B cell (primary cell): ENCODE measurements at regions of chr10 and their contacts with region 1.

Region 1: DNA sequence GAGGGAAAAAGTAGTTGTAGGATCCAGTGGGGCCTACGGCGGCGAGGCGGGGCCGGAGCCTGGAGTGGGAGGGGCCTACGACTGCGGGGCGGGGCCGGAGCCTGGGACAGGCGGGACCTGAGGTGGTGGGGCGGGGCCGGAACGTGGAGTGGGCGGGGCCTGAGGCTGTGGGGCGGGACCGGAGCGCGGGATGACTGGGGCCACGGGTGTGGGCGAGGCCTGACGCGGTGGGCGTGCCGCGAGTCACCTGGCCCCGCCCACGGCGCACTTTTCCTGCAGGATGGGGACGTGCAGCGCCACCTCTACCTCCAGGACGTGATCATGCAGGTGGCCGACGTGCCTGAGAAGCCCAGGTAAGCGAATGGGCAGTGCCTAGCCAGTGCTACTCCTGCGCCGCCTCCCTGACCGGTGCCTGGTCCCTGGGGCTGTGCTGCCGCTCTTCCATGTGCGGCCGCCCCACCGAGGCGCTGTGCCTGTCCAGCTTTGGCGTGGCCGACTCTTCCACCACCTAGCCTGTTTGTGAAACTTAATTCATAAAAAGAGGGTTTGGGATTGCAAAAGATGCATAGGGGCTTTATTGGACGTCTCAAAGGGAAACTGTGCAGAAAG is 501 bp downstream of the ZNF511 start:
- DNase-seq: no peak
- ATAC-seq: peak; percentile 90
- H3K4me3 ChIP-seq: peak overlapping the region in 4 of 5 experiments; percentile 73 to 94 (median 92)
- H3K4me3 Mint-ChIP-seq: peak overlapping the region; percentile 78
- H3K27ac ChIP-seq: peak overlapping the region; percentile 96 to 97
- H3K27ac Mint-ChIP-seq: peak overlapping the region; percentile 88
- H3K4me1 ChIP-seq: peaks cover 21 to 41% of the 10 kb centered on the region in 2 donors
- H3K4me1 Mint-ChIP-seq: peaks cover 37% of the 10 kb centered on the region
- H3K27me3 ChIP-seq: no peaks in the 10 kb centered on the region
- H3K27me3 Mint-ChIP-seq: no peaks in the 10 kb centered on the region
- CTCF ChIP-seq: no peak

Region 2: DNA sequence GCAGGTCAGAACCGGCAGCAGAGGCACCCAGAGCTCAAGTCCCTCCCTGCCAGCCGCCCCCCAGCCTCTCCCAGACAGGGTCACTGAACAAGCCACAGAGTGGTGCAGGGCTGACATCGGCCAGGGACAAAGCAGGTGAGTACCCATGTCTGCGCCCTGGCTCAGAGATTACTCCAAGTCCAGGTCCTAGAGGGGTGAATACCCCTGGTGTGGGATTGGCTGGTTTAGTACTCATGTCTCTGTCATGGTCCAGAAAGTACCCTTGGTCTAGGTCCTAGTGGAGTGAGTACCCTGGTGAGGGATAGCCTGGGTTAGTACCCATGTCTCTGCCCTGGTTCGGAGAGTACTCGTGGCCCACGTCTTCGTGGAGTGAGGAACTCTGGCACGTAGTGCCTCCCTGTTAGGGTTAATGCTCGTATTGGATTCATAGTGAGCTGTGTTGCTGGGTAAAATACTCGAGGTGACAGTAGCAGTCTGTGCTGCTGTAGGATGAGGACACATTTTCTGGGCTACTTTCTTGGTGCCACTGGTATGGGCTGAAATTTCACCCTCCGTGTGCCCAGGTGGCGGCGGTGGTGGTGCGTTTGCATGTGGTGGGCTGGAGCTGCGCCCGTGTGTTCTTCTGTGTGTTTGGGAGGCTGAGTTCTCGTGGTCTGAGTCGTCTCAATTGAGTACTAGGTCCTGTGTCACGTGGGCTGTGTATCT is 174.7 kb before region 1 on chr10:
- CTCF ChIA-PET with region 1: no interaction called
- POLR2A ChIA-PET with region 1: no interaction called
- intact Hi-C with region 1: no loop called
- DNase-seq: no peak
- ATAC-seq: no peak
- H3K4me3 ChIP-seq: no peak overlapping the region
- H3K4me3 Mint-ChIP-seq: peak overlapping the region; percentile 50
- H3K27ac ChIP-seq: no peak overlapping the region
- H3K27ac Mint-ChIP-seq: no peak overlapping the region
- H3K4me1 ChIP-seq: peaks cover 3 to 7% of the 10 kb centered on the region in 2 donors
- H3K4me1 Mint-ChIP-seq: peaks cover 18% of the 10 kb centered on the region
- H3K27me3 ChIP-seq: no peaks in the 10 kb centered on the region
- H3K27me3 Mint-ChIP-seq: peaks cover 10% of the 10 kb centered on the region
- CTCF ChIP-seq: no peak

Region 3: GRCh38 chr10:133278577-133279265 is 30.5 kb before region 1 on chr10:
- CTCF ChIA-PET with region 1: interaction called, 21 read pairs
- POLR2A ChIA-PET with region 1: interaction called, 12 read pairs
- intact Hi-C with region 1: loop called (anchors 1 kb)
- DNase-seq: peak; percentile 68
- ATAC-seq: peak; percentile 24
- H3K4me3 ChIP-seq: peak overlapping the region in 1 of 5 experiments; percentile 33
- H3K4me3 Mint-ChIP-seq: peak overlapping the region; percentile 90
- H3K27ac ChIP-seq: peak overlapping the region; percentile 57 to 97
- H3K27ac Mint-ChIP-seq: peak overlapping the region; percentile 95
- H3K4me1 ChIP-seq: peaks cover 45 to 63% of the 10 kb centered on the region in 2 donors
- H3K4me1 Mint-ChIP-seq: peaks cover 43% of the 10 kb centered on the region
- H3K27me3 ChIP-seq: no peaks in the 10 kb centered on the region
- H3K27me3 Mint-ChIP-seq: no peaks in the 10 kb centered on the region
- CTCF ChIP-seq: no peak

Region 4: GRCh38 chr10:133357285-133358151 is 48.3 kb after region 1 on chr10 and contains the start of gene FUOM:
- CTCF ChIA-PET with region 1: no interaction called
- POLR2A ChIA-PET with region 1: no interaction called
- intact Hi-C with region 1: loop called (anchors 5 kb)
- DNase-seq: peak; percentile 89
- ATAC-seq: peak; percentile 85
- H3K4me3 ChIP-seq: peak within 1 kb of the TSS in 4 of 5 experiments; percentile 57 to 87 (median 68)
- H3K4me3 Mint-ChIP-seq: peak within 1 kb of the TSS; percentile 80
- H3K27ac ChIP-seq: peak within 1 kb of the TSS in 1 of 2 donors; percentile 71
- H3K27ac Mint-ChIP-seq: peak within 1 kb of the TSS; percentile 26
- H3K4me1 ChIP-seq: peaks cover 20 to 39% of the 10 kb centered on the region in 2 donors
- H3K4me1 Mint-ChIP-seq: peaks cover 32% of the 10 kb centered on the region
- H3K27me3 ChIP-seq: no peaks in the 10 kb centered on the region
- H3K27me3 Mint-ChIP-seq: no peaks in the 10 kb centered on the region
- CTCF ChIP-seq: no peak
- total RNA-seq, gene FUOM: 20.7 and 23.8 TPM in 2 replicates

Region 5: GRCh38 chr10:133373104-133373624 is 63.9 kb after region 1 on chr10 and contains the start of gene ECHS1:
- CTCF ChIA-PET with region 1: no interaction called
- POLR2A ChIA-PET with region 1: no interaction called
- intact Hi-C with region 1: loop called (anchors 1 kb)
- DNase-seq: peak; percentile 92
- ATAC-seq: peak; percentile 96
- H3K4me3 ChIP-seq: peak within 1 kb of the TSS; percentile 53 to 74 (median 69)
- H3K4me3 Mint-ChIP-seq: peak within 1 kb of the TSS; percentile 87
- H3K27ac ChIP-seq: peak within 1 kb of the TSS; percentile 65 to 77
- H3K27ac Mint-ChIP-seq: peak within 1 kb of the TSS; percentile 84
- H3K4me1 ChIP-seq: peaks cover 15 to 27% of the 10 kb centered on the region in 2 donors
- H3K4me1 Mint-ChIP-seq: peaks cover 18% of the 10 kb centered on the region
- H3K27me3 ChIP-seq: no peaks in the 10 kb centered on the region
- H3K27me3 Mint-ChIP-seq: no peaks in the 10 kb centered on the region
- CTCF ChIP-seq: no peak
- total RNA-seq, gene ECHS1: 27.5 and 29.5 TPM in 2 replicates

Region 6: DNA sequence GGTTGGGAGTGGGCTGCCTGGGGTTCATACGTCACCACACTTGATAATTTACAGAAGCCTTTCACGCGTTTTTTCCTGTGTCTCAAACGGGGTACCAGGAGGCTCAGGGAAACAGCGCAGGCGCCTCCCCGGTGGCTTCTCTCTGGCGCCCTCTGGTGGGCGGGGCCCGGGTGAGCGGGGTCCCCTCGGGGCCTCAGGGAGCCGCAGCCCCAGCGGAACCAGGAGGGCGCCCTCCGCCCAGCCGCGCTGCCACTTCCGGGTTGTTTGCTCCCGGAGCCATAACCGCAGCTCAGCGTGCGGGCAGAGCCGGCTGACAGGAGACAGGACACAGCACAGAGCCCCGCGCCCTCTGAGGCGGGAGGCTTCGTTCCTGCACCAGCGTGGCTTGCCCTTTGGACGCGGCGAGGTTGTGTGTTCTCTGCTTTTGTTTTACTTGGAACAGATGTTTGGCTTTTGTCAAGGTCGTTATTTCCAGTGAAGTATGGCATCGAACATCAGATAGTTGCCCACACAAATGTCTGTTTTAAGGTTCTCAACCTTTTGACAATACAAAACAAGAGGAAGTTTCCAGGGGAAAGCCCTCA is 211.0 kb after region 1 on chr10:
- CTCF ChIA-PET with region 1: no interaction called
- POLR2A ChIA-PET with region 1: no interaction called
- intact Hi-C with region 1: loop called (anchors 5 kb)
- DNase-seq: peak; percentile 88
- ATAC-seq: peak; percentile 100
- H3K4me3 ChIP-seq: peak overlapping the region; percentile 9 to 65 (median 52)
- H3K4me3 Mint-ChIP-seq: peak overlapping the region; percentile 70
- H3K27ac ChIP-seq: no peak overlapping the region
- H3K27ac Mint-ChIP-seq: no peak overlapping the region
- H3K4me1 ChIP-seq: peaks cover 4 to 12% of the 10 kb centered on the region in 2 donors
- H3K4me1 Mint-ChIP-seq: peaks cover 13% of the 10 kb centered on the region
- H3K27me3 ChIP-seq: no peaks in the 10 kb centered on the region
- H3K27me3 Mint-ChIP-seq: peaks cover 16% of the 10 kb centered on the region
- CTCF ChIP-seq: peak; percentile 95